H1 (cell line): ENCODE measurements at regions of chr6 and their contacts with region 1.

Region 1: GRCh38 chr6:13487122-13488014 is at the start of gene GFOD1:
- DNase-seq: peak; percentile 39 to 89
- H3K4me3 ChIP-seq: peak within 1 kb of the TSS; percentile 57 to 87 (median 75)
- H3K27ac ChIP-seq: no peak within 1 kb of the TSS
- H3K4me1 ChIP-seq: peaks cover 0 to 8% (median 3%) of the 10 kb centered on the region in 4 experiments; a peak in 5 of 7 replicates
- H3K27me3 ChIP-seq: peaks cover 7 to 53% (median 32%) of the 10 kb centered on the region in 4 experiments
- CTCF ChIP-seq: no peak
- EP300 ChIP-seq: no peak
- POLR2A ChIP-seq: peak in 1 of 2 experiments; percentile 40; a peak in 2 of 3 replicates
- RAD21 ChIP-seq: peak; percentile 2 to 15; a peak in 2 of 4 replicates
- total RNA-seq, gene GFOD1: 8.5 and 8.8 TPM in 2 replicates

Region 2: DNA sequence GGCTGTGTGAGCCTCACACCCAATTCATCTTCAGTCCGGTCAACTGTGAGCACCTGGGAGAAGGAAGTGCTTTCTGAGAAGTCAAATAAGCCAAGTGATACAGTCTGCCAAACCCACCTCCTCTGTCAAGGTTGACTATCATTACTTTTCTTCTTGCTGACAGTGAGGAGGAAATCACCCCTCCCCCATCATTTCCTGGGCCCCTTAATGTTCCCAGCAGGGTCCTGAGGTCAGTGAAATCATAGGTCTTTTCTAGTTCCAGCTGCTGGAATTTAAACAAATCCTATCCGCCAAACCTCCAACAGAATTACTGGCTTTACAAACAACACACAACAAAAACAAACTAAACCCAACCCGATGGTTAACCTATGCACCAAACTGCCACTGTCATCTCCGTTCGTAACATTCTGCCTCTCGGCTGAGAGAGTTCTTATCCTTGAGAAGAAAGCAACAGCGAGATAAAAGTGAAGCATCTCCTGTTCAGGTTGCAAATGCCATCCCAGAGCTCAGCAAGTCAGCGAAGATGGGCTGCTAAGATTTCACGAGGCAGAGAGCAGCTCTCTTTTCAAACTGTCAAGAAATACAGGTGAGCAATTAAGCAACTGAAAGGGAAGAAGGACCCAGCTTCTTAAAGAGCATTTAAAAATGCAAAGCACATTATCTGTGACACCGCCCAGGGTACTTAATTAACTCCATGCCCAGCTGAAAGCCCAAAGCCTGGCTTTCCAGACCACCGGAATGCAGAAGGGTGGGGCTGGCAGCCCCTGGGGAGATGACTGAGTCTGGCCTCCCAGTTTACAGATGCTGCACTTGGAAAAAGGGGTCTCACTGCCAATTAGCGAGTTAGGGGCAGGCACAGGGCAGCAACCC is 24.7 kb before region 1 on chr6:
- CTCF ChIA-PET with region 1: no interaction called
- POLR2A ChIA-PET with region 1: interaction called, 12 read pairs
- DNase-seq: no peak
- H3K4me3 ChIP-seq: peak overlapping the region in 1 of 4 experiments; percentile 19; a peak in 1 of 8 replicates
- H3K27ac ChIP-seq: no peak overlapping the region
- H3K4me1 ChIP-seq: peaks cover 7 to 24% (median 19%) of the 10 kb centered on the region in 4 experiments
- H3K27me3 ChIP-seq: no peaks in the 10 kb centered on the region
- CTCF ChIP-seq: no peak
- EP300 ChIP-seq: no peak
- POLR2A ChIP-seq: no peak
- RAD21 ChIP-seq: 0 out of 4 replicates have a peak, but pooled peaks of 1 of the 2 experiments have one; percentile 1

Region 3: GRCh38 chr6:13517116-13517515 is 29.7 kb after region 1 on chr6:
- CTCF ChIA-PET with region 1: no interaction called
- POLR2A ChIA-PET with region 1: no interaction called
- DNase-seq: no peak
- H3K4me3 ChIP-seq: no peak overlapping the region
- H3K27ac ChIP-seq: no peak overlapping the region
- H3K4me1 ChIP-seq: no peaks in the 10 kb centered on the region
- H3K27me3 ChIP-seq: no peaks in the 10 kb centered on the region
- CTCF ChIP-seq: no peak
- EP300 ChIP-seq: no peak
- POLR2A ChIP-seq: no peak
- RAD21 ChIP-seq: no peak

Region 4: DNA sequence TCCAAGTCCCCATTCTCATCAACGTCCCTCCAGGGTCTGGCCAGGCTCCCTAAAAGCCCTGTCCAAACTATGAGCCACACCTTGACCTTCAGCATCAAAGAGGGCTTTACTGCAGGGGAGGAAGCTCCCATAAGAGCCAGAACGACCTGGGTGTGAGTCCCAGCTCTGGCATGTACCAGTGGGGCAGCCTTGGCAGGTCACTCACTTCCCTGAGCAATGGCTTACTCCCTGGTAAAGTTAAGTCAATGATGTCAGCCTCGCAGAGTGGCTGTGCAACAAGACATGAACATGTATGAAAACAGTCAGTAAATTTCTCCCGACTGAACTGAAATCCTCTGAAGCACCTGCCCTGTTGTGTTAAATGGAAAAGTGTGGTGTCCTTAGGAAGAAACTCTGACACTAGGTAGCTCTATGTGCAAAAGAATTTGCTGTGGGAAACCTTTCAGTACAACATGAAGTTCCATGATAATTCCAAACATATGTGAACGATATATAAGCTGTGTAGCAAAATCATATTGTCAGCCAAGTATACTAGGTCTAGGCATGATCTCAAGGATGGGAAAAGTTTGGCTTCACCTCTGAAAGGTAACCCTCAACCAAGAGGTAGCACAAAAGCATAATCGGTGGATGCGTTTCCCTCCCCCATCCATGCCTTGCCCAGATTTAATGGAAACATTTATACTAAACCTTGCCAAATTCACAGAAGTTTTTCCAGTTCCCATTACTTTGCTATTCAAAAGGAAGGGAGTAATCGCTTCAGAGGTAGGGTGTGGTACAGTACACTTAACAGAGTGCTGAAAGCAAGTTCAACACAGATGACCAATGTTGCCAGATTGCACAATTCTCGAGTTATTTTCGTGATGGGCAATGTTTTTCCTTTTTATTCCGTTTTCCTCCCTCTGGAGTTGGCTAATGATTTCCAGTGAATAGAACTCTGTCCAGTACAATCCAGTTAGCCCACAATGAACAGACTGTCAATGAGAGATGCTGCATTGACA is 273.2 kb after region 1 on chr6:
- CTCF ChIA-PET with region 1: no interaction called
- POLR2A ChIA-PET with region 1: no interaction called
- DNase-seq: no peak
- H3K4me3 ChIP-seq: no peak overlapping the region
- H3K27ac ChIP-seq: no peak overlapping the region
- H3K4me1 ChIP-seq: peaks cover 0 to 2% (median 0%) of the 10 kb centered on the region in 4 experiments; a peak in 1 of 7 replicates
- H3K27me3 ChIP-seq: no peaks in the 10 kb centered on the region
- CTCF ChIP-seq: no peak
- EP300 ChIP-seq: no peak
- POLR2A ChIP-seq: no peak
- RAD21 ChIP-seq: no peak